ENCODE measurements at regions of chr6 and their contacts with region 1.

Region 1: GRCh38 chr6:28981833-28982475 is 23.2 kb downstream of the ZNF311 start:
- DNase-seq: peak; percentile 46 to 91 (median 64)
- ATAC-seq: peak; percentile 62
- H3K4me3 ChIP-seq: peak overlapping the region; percentile 88
- H3K4me3 Mint-ChIP-seq: peak overlapping the region; percentile 95
- H3K27ac ChIP-seq: no peak overlapping the region
- H3K27ac Mint-ChIP-seq: peak overlapping the region; percentile 98
- H3K4me1 ChIP-seq: peaks cover 28% of the 10 kb centered on the region
- H3K4me1 Mint-ChIP-seq: peaks cover 82% of the 10 kb centered on the region
- H3K27me3 ChIP-seq: peaks cover 0 to 15% of the 10 kb centered on the region in 2 experiments
- H3K27me3 Mint-ChIP-seq: peaks cover 64% of the 10 kb centered on the region
- CTCF ChIP-seq: no peak

Region 2: GRCh38 chr6:28863604-28864320 is 118.2 kb before region 1 on chr6:
- CTCF ChIA-PET with region 1: no interaction called
- POLR2A ChIA-PET with region 1: interaction called, 12 read pairs
- intact Hi-C with region 1: loop called (anchors 1 to 5 kb)
- DNase-seq: peak; percentile 69 to 93 (median 80)
- ATAC-seq: peak; percentile 39
- H3K4me3 ChIP-seq: peak overlapping the region; percentile 82
- H3K4me3 Mint-ChIP-seq: peak overlapping the region; percentile 88
- H3K27ac ChIP-seq: peak overlapping the region; percentile 30 to 47
- H3K27ac Mint-ChIP-seq: peak overlapping the region; percentile 93
- H3K4me1 ChIP-seq: peaks cover 34% of the 10 kb centered on the region
- H3K4me1 Mint-ChIP-seq: peaks cover 51% of the 10 kb centered on the region
- H3K27me3 ChIP-seq: no peaks in the 10 kb centered on the region
- H3K27me3 Mint-ChIP-seq: peaks cover 7% of the 10 kb centered on the region
- CTCF ChIP-seq: peak; percentile 10

Region 3: GRCh38 chr6:28947831-28948270 is 34.1 kb before region 1 on chr6:
- CTCF ChIA-PET with region 1: interaction called, 5 read pairs
- POLR2A ChIA-PET with region 1: interaction called, 6 read pairs
- intact Hi-C with region 1: loop called (anchors 1 to 2 kb)
- DNase-seq: no peak
- ATAC-seq: no peak
- H3K4me3 ChIP-seq: no peak overlapping the region
- H3K4me3 Mint-ChIP-seq: no peak overlapping the region
- H3K27ac ChIP-seq: no peak overlapping the region
- H3K27ac Mint-ChIP-seq: peak overlapping the region; percentile 4
- H3K4me1 ChIP-seq: peaks cover 14% of the 10 kb centered on the region
- H3K4me1 Mint-ChIP-seq: peaks cover 24% of the 10 kb centered on the region
- H3K27me3 ChIP-seq: no peaks in the 10 kb centered on the region
- H3K27me3 Mint-ChIP-seq: peaks cover 11% of the 10 kb centered on the region
- CTCF ChIP-seq: no peak

Region 4: GRCh38 chr6:29016559-29017427 is 34.8 kb after region 1 on chr6:
- CTCF ChIA-PET with region 1: interaction called, 3 read pairs
- POLR2A ChIA-PET with region 1: interaction called, 7 read pairs
- intact Hi-C with region 1: loop called (anchors 2 kb)
- DNase-seq: peak; percentile 71 to 91 (median 80)
- ATAC-seq: peak; percentile 66
- H3K4me3 ChIP-seq: peak overlapping the region; percentile 55
- H3K4me3 Mint-ChIP-seq: peak overlapping the region; percentile 87
- H3K27ac ChIP-seq: no peak overlapping the region
- H3K27ac Mint-ChIP-seq: peak overlapping the region; percentile 50
- H3K4me1 ChIP-seq: peaks cover 21% of the 10 kb centered on the region
- H3K4me1 Mint-ChIP-seq: peaks cover 16% of the 10 kb centered on the region
- H3K27me3 ChIP-seq: peaks cover 13 to 24% of the 10 kb centered on the region in 2 experiments
- H3K27me3 Mint-ChIP-seq: peaks cover 42% of the 10 kb centered on the region
- CTCF ChIP-seq: peak; percentile 95

Measured in CD4-positive, alpha-beta T cell (primary cell).